ENCODE measurements at regions of chr13 and their contacts with region 1.

Region 1: DNA sequence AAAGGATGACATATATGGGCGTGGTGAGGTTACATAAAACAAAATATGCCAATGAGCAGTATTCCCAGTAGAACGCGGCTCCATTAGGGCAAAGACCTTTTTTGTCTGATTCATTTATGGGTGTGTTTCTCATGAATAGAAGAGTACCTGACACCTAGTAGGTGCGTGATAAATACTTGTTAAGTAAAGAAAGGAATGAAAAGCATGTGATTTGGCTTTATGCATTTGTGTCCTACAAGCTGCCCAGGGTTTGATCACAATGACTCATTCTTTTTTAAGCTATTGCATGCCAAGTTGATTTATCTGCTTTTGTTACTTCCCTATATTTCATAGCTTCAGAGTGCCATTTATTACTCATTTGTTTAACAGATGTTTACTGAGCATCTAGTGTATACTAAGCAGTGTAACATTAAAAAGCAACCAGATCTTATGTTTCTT is 19.1 kb upstream of the KCTD4 start:
- DNase-seq: no peak
- ATAC-seq: no peak; the same call in 2 of the 3 replicates
- H3K4me3 ChIP-seq: no peak overlapping the region
- H3K27ac ChIP-seq: no peak overlapping the region
- H3K4me1 ChIP-seq: no peaks in the 10 kb centered on the region
- H3K27me3 ChIP-seq: no peaks in the 10 kb centered on the region
- CTCF ChIP-seq: no peak
- EP300 ChIP-seq: no peak
- POLR2A ChIP-seq: no peak
- RAD21 ChIP-seq: no peak

Region 2: DNA sequence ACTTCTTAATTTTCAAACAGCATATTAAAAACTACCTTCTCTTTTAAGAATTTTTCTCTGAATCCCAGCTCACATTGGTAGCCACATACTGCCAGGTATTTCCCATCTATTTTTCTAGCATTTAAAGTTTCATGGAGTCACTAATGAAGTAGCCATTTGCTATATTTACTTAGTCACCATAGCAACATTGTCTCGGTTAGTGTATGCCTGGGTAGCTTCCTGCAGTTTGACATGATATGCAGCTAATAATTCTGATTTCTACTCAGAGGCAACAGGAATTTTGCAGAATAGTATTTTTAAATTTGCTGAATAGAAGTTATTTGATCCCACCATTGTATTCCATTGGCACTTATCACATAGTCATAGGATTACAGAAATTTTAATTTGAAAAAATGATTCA is 11.8 kb after region 1 on chr13:
- CTCF ChIA-PET with region 1: interaction called, 12 read pairs
- POLR2A ChIA-PET with region 1: interaction called, 3 read pairs
- RAD21 ChIA-PET with region 1: interaction called, 3 read pairs
- SMC1A ChIA-PET with region 1: interaction called, 9 read pairs
- in situ Hi-C with region 1: no loop called
- intact Hi-C with region 1: no loop called
- DNase-seq: no peak
- ATAC-seq: peak; percentile 73
- H3K4me3 ChIP-seq: no peak overlapping the region
- H3K27ac ChIP-seq: no peak overlapping the region
- H3K4me1 ChIP-seq: 0 out of 2 replicates have a peak, but pooled peaks cover 3% of the 10 kb centered on the region
- H3K27me3 ChIP-seq: no peaks in the 10 kb centered on the region
- CTCF ChIP-seq: no peak
- EP300 ChIP-seq: no peak
- POLR2A ChIP-seq: no peak
- RAD21 ChIP-seq: no peak

Region 3: DNA sequence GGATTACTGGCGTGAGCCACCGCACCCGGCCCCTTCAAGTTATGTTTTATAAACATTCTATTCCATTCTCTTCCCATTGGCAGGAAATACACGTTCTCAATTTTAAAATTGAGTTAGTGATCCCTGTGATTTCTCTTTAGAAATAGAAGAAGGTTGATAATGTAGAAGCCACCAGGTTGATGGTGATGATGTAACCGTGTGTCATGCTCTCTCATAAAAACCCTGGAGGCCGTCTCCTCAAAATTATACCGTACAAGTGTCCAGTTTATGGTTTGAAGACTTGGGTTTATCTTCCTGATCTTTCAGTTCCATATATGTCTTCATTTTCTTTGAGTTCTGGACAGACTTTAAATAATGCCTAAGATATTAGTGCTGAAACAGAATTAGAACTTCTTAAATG is 277.0 kb after region 1 on chr13:
- CTCF ChIA-PET with region 1: no interaction called
- POLR2A ChIA-PET with region 1: no interaction called
- RAD21 ChIA-PET with region 1: no interaction called
- SMC1A ChIA-PET with region 1: no interaction called
- in situ Hi-C with region 1: no loop called
- intact Hi-C with region 1: no loop called
- DNase-seq: no peak
- ATAC-seq: no peak
- H3K4me3 ChIP-seq: no peak overlapping the region
- H3K27ac ChIP-seq: no peak overlapping the region
- H3K4me1 ChIP-seq: no peaks in the 10 kb centered on the region
- H3K27me3 ChIP-seq: no peaks in the 10 kb centered on the region
- CTCF ChIP-seq: no peak
- EP300 ChIP-seq: no peak
- POLR2A ChIP-seq: no peak
- RAD21 ChIP-seq: no peak

Measured in GM12878 (cell line).